ENCODE measurements at regions of chr1 and their contacts with region 1.

Region 1: DNA sequence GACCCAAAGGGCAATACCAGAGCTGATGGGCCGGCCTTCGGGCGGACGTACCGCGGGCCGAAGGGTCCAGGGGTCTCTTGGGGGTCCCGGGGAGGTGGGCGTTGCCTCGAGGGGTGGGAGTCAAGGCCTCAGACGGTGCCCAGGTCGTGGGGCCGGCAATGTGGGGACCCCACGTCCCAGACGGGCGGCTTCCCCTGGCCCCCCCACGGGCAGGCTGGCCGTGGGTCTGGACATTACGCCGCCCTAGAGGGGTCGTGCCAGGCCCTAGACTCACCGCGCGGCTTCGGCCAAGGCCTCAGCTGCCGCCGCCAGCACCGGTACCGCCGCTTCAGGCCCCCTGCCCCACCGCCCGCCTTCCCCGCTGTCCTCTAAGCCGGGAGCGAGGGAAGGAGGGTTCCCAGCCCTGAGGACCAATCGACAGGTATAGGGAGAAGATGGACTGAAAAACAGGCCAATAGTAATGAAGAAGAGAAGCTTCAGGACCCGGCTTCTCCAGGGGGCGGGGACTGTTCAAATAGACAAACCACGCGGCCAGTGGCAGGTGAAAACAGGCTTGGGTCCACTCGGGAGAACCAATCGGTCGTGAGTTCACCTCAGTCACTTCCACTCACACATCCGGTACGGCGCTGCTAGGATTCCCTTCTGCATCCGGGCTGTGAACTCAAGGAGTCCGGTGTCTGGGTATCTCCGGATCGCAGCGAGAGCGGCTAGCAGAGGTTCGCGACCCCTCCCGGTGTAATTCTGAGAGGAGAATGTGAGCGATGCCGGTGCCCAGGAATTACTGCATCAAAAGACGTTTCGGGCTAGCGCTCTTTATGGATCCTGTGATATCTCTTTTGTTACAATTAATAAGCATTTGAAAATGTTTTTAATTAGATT is at the start of gene MTOR:
- DNase-seq: peak; percentile 100
- H3K4me3 ChIP-seq: peak within 1 kb of the TSS; percentile 97 to 100 (median 98)
- H3K27ac ChIP-seq: peak within 1 kb of the TSS; percentile 71
- H3K4me1 ChIP-seq: peaks cover 8% of the 10 kb centered on the region
- H3K27me3 ChIP-seq: no peaks in the 10 kb centered on the region
- CTCF ChIP-seq: peak in 1 of 2 donors; percentile 34
- total RNA-seq, gene MTOR: 44.7 to 64.8 TPM

Region 2: GRCh38 chr1:11053758-11054137 is 208.7 kb before region 1 on chr1:
- CTCF ChIA-PET with region 1: no interaction called
- dilution Hi-C with region 1: loop called (anchors 5 kb)
- in situ Hi-C with region 1: no loop called
- intact Hi-C with region 1: no loop called
- DNase-seq: no peak
- H3K4me3 ChIP-seq: no peak overlapping the region
- H3K27ac ChIP-seq: no peak overlapping the region
- H3K4me1 ChIP-seq: no peaks in the 10 kb centered on the region
- H3K27me3 ChIP-seq: no peaks in the 10 kb centered on the region
- CTCF ChIP-seq: no peak

Region 3: GRCh38 chr1:11214698-11215380 is 47.6 kb before region 1 on chr1:
- CTCF ChIA-PET with region 1: no interaction called
- dilution Hi-C with region 1: loop called (anchors 5 kb)
- in situ Hi-C with region 1: no loop called
- intact Hi-C with region 1: no loop called
- DNase-seq: no peak
- H3K4me3 ChIP-seq: no peak overlapping the region
- H3K27ac ChIP-seq: no peak overlapping the region
- H3K4me1 ChIP-seq: no peaks in the 10 kb centered on the region
- H3K27me3 ChIP-seq: no peaks in the 10 kb centered on the region
- CTCF ChIP-seq: no peak

Region 4: DNA sequence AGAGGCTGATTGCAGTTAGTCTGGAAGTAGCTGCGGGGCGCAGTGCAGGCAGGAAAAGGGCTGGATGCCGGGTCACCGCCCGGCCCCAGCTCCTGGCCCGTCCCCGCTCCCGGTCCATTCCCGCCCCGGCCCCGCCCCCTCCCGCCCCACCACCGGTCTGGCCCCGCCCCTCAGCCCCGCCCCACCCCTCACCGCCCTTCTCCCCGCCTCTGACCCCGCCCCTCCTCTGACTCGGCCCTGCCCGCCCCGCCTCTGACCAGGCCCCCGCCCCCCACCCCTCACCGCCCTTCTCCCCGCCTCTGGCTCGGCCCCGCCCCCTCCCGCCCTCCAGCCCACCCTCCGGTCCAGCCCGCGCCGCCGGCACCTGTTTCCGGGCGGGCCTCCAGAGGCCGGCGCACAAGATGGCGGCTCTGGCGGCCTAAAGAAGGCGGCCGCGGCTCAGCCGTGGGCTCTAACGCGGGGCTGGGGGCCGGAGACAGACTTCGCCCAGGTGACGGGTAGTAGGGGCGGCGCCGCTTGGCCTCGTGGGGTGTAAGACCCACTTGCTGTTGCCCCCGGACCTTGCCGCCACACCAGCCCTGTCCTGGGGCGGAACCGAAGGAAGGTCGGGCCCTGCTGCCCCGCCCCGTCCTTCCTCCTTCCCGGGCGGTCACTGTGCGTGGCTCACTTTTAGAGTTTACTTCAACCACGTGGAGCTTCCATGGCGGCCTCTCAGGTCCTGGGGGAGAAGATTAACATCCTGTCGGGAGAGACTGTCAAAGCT is 10.6 kb after region 1 on chr1 and contains the start of gene UBIAD1:
- CTCF ChIA-PET with region 1: no interaction called
- dilution Hi-C with region 1: no loop called
- in situ Hi-C with region 1: no loop called
- intact Hi-C with region 1: loop called (anchors 1 kb)
- DNase-seq: peak; percentile 85
- H3K4me3 ChIP-seq: peak within 1 kb of the TSS; percentile 57 to 99 (median 74)
- H3K27ac ChIP-seq: peak within 1 kb of the TSS; percentile 53
- H3K4me1 ChIP-seq: peaks cover 9% of the 10 kb centered on the region
- H3K27me3 ChIP-seq: no peaks in the 10 kb centered on the region
- CTCF ChIP-seq: peak in 1 of 2 donors; percentile 42
- total RNA-seq, gene UBIAD1: 9.0 to 14.5 TPM

Region 5: GRCh38 chr1:11298390-11299224 is 36.2 kb after region 1 on chr1:
- CTCF ChIA-PET with region 1: no interaction called
- dilution Hi-C with region 1: loop called (anchors 5 kb)
- in situ Hi-C with region 1: no loop called
- intact Hi-C with region 1: no loop called
- DNase-seq: no peak
- H3K4me3 ChIP-seq: no peak overlapping the region
- H3K27ac ChIP-seq: no peak overlapping the region
- H3K4me1 ChIP-seq: no peaks in the 10 kb centered on the region
- H3K27me3 ChIP-seq: no peaks in the 10 kb centered on the region
- CTCF ChIP-seq: no peak

Region 6: GRCh38 chr1:11331036-11331944 is 68.9 kb after region 1 on chr1:
- CTCF ChIA-PET with region 1: no interaction called
- dilution Hi-C with region 1: no loop called
- in situ Hi-C with region 1: no loop called
- intact Hi-C with region 1: no loop called
- DNase-seq: peak; percentile 10
- H3K4me3 ChIP-seq: no peak overlapping the region
- H3K27ac ChIP-seq: no peak overlapping the region
- H3K4me1 ChIP-seq: no peaks in the 10 kb centered on the region
- H3K27me3 ChIP-seq: no peaks in the 10 kb centered on the region
- CTCF ChIP-seq: no peak

Region 7: DNA sequence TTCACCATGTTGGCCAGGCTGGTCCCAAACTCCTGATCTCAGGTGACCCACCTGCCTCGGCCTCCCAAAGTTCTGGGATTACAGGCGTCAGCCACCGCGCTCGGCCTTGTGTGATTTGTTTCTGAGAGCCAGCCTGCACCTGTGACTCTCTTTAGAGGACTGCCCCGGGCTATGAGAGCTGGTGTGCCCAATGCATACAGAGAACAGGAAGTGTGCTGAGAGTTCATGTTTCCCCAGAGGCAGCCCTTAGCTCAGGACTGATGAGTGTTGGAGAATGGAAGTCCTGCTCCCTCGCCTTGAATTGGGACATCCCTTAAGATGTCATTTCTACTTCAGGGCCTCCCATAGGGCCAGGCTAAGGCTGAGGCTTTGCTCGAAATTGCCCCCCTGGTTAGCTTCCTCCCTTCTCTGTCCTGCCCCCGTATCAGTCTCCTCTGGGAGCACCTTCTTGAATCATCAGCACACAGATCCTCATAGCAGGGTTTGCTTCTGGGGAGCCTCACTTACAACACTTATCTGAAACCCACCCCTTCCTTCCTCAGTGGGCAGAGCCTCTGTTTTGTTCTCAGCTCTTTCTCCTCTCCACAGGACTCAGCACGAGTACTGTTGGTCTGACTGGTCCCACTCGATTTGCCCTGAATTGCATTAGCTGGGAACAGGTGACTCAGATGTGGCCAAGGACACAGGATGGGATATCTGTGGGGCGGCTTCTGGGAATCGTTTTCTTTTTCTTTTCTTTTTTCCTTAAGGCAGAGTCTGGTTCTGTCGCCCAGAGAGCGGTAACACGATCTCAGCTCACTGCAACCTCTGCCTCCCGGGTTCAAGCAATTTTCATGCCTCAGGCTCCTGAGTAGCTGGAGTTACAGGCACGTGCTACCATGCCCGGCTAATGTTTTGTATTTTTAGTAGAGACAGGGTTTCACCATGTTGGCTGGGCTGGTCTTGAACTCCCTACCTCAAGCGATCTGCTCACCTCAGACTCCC is 90.7 kb after region 1 on chr1:
- CTCF ChIA-PET with region 1: no interaction called
- dilution Hi-C with region 1: no loop called
- in situ Hi-C with region 1: no loop called
- intact Hi-C with region 1: no loop called
- DNase-seq: no peak
- H3K4me3 ChIP-seq: no peak overlapping the region
- H3K27ac ChIP-seq: no peak overlapping the region
- H3K4me1 ChIP-seq: no peaks in the 10 kb centered on the region
- H3K27me3 ChIP-seq: no peaks in the 10 kb centered on the region
- CTCF ChIP-seq: no peak

Region 8: DNA sequence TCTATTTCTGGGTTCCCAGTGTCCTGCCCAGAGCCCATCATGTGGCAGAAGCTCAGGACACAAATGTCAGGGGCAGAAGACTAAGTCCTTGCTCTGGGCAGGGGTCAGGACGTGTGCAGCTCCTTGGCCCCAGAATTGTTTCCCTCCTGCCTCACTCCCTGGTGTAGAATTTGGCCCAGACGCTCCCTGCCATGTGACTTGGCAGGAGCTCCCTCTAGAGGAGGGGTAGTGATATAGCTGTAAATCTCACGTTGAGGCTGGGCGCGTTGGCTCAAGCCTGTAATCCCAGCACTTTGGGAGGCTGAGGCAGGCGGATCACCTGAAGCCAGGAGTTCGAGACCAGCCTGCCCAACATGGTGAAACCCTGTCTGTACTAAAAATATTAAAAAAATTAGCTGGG is 101.8 kb after region 1 on chr1:
- CTCF ChIA-PET with region 1: no interaction called
- dilution Hi-C with region 1: no loop called
- in situ Hi-C with region 1: no loop called
- intact Hi-C with region 1: loop called (anchors 5 kb)
- DNase-seq: no peak
- H3K4me3 ChIP-seq: no peak overlapping the region
- H3K27ac ChIP-seq: no peak overlapping the region
- H3K4me1 ChIP-seq: no peaks in the 10 kb centered on the region
- H3K27me3 ChIP-seq: peaks cover 4% of the 10 kb centered on the region
- CTCF ChIP-seq: peak; percentile 32 to 58

Region 9: GRCh38 chr1:11518791-11519628 is 256.6 kb after region 1 on chr1:
- CTCF ChIA-PET with region 1: no interaction called
- dilution Hi-C with region 1: no loop called
- in situ Hi-C with region 1: no loop called
- intact Hi-C with region 1: no loop called
- DNase-seq: no peak
- H3K4me3 ChIP-seq: no peak overlapping the region
- H3K27ac ChIP-seq: no peak overlapping the region
- H3K4me1 ChIP-seq: no peaks in the 10 kb centered on the region
- H3K27me3 ChIP-seq: no peaks in the 10 kb centered on the region
- CTCF ChIP-seq: no peak

Region 10: GRCh38 chr1:11797525-11798216 is 535.3 kb after region 1 on chr1:
- CTCF ChIA-PET with region 1: no interaction called
- dilution Hi-C with region 1: loop called (anchors 5 kb)
- in situ Hi-C with region 1: no loop called
- intact Hi-C with region 1: no loop called
- DNase-seq: no peak
- H3K4me3 ChIP-seq: no peak overlapping the region
- H3K27ac ChIP-seq: no peak overlapping the region
- H3K4me1 ChIP-seq: peaks cover 6% of the 10 kb centered on the region
- H3K27me3 ChIP-seq: no peaks in the 10 kb centered on the region
- CTCF ChIP-seq: no peak

Measured in mammary epithelial cell (primary cell).